ENCODE measurements at regions of chr11 and their contacts with region 1.

Region 1: DNA sequence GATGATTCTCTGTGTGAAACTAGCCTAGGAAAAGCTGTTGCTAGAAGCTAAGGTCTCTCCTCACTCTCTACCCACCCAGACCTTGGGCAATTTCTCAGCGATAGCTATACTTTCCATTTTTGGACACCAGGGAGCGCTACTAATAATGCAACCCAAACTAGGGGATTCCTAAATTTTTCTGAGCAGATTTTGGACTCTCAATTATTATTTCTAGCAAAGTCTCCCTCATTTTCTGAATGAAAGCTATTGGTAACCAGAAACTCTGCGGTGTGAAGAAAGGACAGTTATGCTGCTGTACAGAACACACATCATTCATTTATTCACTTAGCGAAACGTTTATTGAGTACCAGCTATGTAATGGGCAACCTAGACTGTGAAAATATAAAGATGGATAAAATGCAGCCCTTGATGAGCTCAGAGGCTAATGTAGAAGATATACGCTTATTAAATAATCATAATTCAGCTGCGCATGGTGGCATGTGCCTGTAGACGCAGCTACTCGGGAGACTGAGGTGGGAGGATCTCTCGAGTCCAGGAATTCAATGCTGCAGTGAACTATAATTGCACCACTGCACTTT is 6.1 kb upstream of the STIM1 start:
- DNase-seq: peak; percentile 49
- H3K27ac ChIP-seq: no peak overlapping the region
- CTCF ChIP-seq: peak; percentile 73

Region 2: GRCh38 chr11:4072668-4073285 is 223.4 kb after region 1 on chr11:
- CTCF ChIA-PET with region 1: interaction called, 93 read pairs
- POLR2A ChIA-PET with region 1: interaction called, 8 read pairs
- DNase-seq: peak; percentile 67
- H3K27ac ChIP-seq: no peak overlapping the region
- CTCF ChIP-seq: peak; percentile 77

Measured in RWPE1 (cell line).